ENCODE measurements at regions of chr1 and their contacts with region 1.

Region 1: DNA sequence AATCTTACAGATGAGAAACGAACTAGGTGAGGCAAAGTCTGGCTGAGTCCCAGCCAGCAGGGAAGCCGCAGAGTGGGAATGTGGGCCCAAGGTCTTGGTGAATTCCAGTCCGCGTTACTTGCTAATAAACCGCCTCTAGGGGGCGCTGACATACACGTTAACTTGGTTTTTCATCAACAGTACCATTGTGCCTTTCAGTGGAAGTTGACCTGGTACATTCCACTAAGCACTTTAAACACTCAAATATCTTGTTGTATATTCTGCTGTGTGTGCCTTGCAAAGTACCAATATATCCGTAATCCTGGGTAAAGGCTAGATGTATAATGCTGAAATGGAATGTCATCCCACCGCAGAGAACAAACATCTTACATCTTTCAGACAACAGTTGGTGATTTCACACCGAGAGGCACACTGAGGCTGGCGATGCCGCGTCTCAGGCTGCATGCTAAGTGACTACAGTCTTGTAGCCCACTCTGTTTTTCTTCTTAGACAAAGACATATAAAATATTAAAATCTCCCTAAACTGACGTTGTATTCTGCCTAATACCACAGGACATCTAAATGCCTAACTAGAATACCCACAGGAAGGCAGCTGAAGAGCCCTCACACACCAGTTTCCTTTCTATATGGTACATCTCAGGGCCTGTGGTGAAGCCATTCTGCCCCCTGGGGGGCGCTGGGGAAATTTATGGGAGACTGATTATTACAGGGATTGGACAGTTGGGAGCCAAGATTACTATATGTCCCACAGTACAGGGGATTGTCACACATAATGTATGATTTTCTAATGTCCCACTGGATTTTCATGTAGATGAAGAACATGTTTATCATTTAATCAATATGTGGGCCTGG is 49.2 kb upstream of the C1orf198 start:
- DNase-seq: no peak
- H3K4me3 ChIP-seq: no peak overlapping the region
- CTCF ChIP-seq: peak; percentile 62

Region 2: DNA sequence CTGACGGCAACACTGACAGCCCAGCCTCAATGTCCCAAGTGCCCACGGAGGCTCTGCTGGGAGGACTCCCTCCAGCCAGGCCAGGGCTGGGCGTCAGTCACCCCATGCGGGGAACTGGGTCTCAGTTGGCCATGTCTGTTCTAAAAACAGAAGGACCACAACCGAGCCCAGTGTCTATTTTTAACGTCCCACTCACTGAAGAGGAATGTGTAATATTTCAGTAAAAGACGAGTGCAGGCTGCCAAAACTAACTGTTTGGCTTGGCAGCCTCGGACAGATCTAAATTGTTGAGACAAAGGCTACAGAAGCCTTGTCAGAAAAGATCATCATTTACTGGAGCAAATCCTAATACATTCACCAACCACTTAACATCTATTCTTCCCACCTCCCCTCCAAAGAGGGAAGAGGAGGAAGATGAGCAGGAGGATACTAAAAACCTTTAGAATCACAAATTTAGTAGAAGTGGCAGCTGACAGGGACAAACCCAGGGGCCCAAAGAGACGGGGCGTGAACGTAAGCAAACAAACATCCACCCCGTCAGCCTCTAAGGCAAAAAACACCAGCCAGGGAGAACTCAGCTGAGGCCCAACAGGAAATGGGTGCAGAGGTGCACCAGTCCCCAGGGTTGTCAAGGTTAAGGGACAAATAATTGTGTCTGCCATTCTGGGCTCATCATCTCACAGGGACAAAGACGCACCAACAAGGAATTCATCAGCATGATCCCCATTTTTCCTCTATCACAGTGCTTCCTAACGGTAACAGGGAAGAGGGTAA is 67.9 kb before region 1 on chr1:
- CTCF ChIA-PET with region 1: interaction called, 10 read pairs
- POLR2A ChIA-PET with region 1: no interaction called
- DNase-seq: peak; percentile 80
- H3K4me3 ChIP-seq: no peak overlapping the region
- CTCF ChIP-seq: no peak

Region 3: GRCh38 chr1:230899841-230900251 is 17.7 kb before region 1 on chr1:
- CTCF ChIA-PET with region 1: interaction called, 48 read pairs
- POLR2A ChIA-PET with region 1: no interaction called
- DNase-seq: peak; percentile 66
- H3K4me3 ChIP-seq: no peak overlapping the region
- CTCF ChIP-seq: no peak

Region 4: DNA sequence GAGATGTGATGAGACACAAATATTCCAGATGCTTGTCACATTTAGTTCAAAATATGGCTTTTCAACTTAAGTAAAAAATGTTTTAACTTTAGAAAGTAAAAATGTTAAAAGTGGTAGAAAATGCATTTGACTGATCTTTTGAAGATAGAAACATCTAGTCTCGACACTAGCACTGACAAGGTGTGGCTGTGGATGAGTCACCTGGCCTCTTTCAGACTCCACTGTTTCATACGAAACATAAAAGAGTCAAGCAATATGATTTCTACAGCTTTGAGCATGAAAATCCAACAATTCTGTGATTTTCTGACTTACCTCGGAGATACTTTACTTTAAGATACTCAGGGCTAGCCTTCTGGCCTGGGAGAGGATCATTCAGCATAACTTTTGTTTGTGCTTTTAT is 13.5 kb after region 1 on chr1:
- CTCF ChIA-PET with region 1: interaction called, 60 read pairs
- POLR2A ChIA-PET with region 1: no interaction called
- DNase-seq: no peak
- H3K4me3 ChIP-seq: no peak overlapping the region
- CTCF ChIP-seq: no peak

Measured in AG04449 (cell line).